AG04450 (cell line): ENCODE measurements at regions of chr1 and their contacts with region 1.

Region 1: DNA sequence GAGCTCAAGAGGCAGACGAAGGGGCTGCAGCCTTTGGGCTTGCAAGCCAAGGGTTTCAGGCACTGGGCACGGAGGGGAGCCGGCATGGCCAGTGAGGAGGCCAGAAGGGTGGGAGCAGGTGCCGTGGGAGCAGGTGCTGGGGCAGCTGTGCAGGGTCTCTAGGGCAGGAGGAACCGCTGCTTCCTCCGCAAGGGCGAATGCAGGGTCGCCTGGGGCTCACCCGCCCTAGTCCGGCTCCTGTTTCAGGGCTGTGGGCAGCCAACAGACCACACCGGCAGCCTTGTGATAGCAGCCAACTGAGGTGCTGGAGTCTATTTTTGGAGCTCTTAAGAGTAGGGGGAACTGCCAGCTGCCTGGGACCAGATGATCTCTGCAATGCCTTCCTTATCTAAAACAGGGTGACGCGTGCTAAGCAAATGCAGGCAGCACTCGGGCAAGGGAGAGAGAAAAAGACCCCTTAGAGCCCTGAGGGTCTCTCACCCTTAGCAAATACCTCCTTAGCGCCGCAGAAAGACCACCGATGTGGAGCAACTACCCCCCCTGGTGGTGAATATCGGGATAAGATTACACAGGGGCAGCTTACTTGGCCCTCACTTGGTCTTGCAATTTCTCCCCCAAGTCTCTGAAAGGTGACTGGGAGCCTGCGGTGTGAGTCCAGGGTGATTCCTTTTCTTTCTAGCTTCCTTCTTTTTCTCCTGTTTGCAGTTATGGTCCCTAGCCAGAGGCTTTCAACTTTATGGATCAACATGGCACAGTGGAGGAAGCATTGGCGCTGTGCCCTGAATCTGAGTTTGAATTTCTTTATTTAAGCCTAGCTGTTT is 20.7 kb upstream of the MAPKAPK2 start:
- DNase-seq: peak; percentile 29
- H3K4me3 ChIP-seq: peak overlapping the region; percentile 31; the same call in 1 of the 2 replicates
- H3K27ac ChIP-seq: no peak overlapping the region
- H3K27me3 ChIP-seq: peaks cover 14% of the 10 kb centered on the region
- CTCF ChIP-seq: peak; percentile 82

Region 2: DNA sequence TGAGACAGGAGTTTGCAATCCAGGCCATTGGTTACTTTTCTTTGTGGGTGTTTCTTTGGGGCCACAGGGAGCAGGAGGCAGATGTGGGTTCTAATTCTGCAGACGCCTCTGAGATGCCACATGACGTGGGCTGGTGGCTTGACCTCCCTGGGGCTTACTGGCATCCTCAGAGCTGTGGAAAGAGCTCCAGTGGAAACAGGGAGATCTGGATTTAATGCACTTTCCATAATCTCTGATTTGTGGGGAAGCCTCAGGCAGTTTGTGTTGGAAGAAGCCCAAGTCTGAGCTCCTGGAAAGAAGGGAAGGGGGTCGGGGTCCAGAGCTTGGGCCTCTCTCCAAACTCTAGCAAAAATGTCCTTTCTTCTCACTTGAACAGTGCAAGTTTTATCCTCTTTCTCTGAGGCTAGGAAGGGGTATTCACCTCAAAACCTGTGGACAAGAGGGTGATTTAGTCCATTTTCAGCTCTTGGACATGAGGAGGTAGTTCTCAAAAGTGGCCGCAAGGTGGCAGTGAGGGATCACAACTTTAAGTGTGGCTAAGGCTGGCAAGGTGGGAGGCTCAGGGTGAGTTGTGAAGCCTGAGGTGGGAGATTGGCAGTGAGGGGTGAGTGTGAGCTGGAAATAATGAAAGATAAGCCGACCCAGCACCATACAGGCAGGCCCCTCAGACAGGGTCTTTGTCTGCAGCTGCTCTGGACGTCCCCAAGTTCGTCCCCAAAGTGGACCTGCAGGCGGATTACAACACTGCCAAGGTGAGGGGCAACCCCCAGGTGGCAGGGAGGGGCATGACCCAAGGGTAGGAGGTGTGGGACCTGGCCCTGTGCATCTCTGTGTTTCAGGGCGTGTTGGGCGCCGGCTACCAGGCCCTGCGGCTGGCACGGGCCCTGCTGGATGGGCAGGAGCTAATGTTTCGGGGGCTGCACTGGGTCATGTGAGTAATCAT is 184.6 kb before region 1 on chr1:
- CTCF ChIA-PET with region 1: interaction called, 17 read pairs
- POLR2A ChIA-PET with region 1: no interaction called
- DNase-seq: peak; percentile 59
- H3K4me3 ChIP-seq: no peak overlapping the region
- H3K27ac ChIP-seq: no peak overlapping the region
- H3K27me3 ChIP-seq: no peaks in the 10 kb centered on the region
- CTCF ChIP-seq: peak; percentile 83

Region 3: GRCh38 chr1:206589206-206589605 is 74.8 kb before region 1 on chr1:
- CTCF ChIA-PET with region 1: interaction called, 25 read pairs
- POLR2A ChIA-PET with region 1: no interaction called
- DNase-seq: peak; percentile 92
- H3K4me3 ChIP-seq: no peak overlapping the region
- H3K27ac ChIP-seq: peak overlapping the region; percentile 77
- H3K27me3 ChIP-seq: no peaks in the 10 kb centered on the region
- CTCF ChIP-seq: no peak

Region 4: DNA sequence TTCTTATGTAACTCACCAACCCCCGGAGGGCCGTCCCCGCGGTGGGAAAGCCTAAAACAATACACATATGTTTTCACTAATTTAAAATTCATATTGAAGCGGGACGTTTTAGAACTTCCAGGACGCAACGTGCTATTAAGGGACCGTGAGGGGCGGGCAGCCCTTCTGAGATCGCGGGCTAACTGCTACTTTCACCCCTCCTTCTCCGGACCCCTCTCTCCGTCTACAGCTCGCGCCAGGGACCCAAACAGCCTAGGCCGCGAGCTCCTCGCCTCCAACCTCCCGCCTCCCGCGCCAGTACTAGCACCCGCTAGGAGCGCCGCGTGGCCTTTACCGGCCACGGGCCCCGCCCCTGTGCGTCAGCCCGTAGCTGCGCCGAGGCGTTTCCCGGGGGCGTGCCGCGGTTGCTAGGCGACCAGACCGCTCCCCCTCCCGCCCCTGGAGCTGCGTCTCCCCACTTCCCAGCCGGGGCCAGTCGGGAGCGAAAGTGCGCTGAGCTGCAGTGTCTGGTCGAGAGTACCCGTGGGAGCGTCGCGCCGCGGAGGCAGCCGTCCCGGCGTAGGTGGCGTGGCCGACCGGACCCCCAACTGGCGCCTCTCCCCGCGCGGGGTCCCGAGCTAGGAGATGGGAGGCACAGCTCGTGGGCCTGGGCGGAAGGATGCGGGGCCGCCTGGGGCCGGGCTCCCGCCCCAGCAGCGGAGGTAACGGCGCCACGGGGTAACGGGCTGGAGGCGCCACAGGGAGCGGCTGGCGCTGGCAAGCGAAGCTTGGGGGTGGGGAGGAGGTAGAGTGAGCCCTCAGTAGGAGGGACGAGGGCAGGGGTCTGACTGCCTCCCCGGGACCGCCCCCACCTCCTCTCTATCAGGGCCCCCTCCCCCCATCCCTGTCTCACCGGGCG is 28.7 kb before region 1 on chr1 and contains the start of gene DYRK3:
- CTCF ChIA-PET with region 1: interaction called, 202 read pairs
- POLR2A ChIA-PET with region 1: interaction called, 17 read pairs
- DNase-seq: peak; percentile 78
- H3K4me3 ChIP-seq: peak within 1 kb of the TSS; percentile 80
- H3K27ac ChIP-seq: peak within 1 kb of the TSS; percentile 69
- H3K27me3 ChIP-seq: no peaks in the 10 kb centered on the region
- CTCF ChIP-seq: no peak
- polyA plus RNA-seq, gene DYRK3: 13.4 and 13.8 TPM in 2 replicates

Region 5: DNA sequence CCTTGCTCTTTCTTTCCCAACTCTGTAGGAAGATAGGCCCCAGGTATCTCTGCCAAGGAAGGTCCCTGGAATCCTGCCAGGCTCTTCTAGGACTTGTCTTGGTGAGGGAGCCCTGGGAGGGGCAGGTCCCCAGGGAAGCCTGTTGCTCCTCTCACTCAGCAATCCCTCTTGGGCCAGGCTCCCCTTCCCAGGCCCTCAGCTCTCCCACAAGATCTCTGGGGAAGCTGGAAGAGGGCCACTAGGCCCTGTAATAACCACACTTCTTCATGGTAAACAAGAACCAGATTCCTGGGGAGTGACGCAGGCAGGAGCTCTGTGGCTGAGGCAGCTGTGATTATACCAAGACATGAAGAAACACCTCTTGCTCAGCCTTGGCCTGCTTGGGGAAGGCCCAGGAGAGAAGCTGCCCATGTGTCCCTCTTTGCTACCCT is 10.7 kb after region 1 on chr1:
- CTCF ChIA-PET with region 1: interaction called, 104 read pairs
- POLR2A ChIA-PET with region 1: interaction called, 3 read pairs
- DNase-seq: peak; percentile 98
- H3K4me3 ChIP-seq: no peak overlapping the region
- H3K27ac ChIP-seq: peak overlapping the region; percentile 96
- H3K27me3 ChIP-seq: peaks cover 3% of the 10 kb centered on the region
- CTCF ChIP-seq: no peak

Region 6: GRCh38 chr1:206700445-206701036 is 36.5 kb after region 1 on chr1:
- CTCF ChIA-PET with region 1: interaction called, 16 read pairs
- POLR2A ChIA-PET with region 1: no interaction called
- DNase-seq: peak; percentile 33
- H3K4me3 ChIP-seq: no peak overlapping the region
- H3K27ac ChIP-seq: peak overlapping the region; percentile 52
- H3K27me3 ChIP-seq: no peaks in the 10 kb centered on the region
- CTCF ChIP-seq: no peak

Region 7: DNA sequence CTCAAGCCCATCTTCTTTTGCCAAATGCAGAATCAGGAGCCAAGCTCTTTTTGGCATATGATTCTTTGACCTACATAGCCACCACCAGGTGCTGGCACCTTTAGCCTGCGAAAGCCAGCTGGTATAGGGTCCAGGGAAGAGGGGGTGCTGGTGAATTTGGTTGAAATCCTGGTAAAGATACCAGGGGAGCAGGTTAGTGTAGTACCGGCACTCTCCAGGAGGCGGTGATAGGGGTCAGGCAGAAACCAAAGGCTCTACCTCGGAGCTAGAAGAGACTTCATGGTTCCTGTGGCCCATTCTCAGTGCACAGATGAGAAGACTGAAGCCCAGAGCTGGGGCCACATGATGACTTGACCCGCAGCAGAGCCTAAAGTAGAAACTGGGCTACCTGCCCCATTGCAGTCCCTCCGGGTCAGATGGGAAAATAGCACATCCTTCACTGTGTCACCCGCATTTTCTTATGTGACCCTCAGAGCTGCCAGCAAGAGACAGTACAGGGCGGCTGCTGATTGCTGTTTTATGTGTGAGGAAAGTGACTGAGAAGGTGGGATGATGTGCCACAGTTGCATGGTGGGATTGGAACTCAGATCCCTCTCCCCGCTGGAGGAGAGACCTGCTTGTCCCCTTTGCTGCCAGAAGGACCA is 70.6 kb after region 1 on chr1:
- CTCF ChIA-PET with region 1: interaction called, 13 read pairs
- POLR2A ChIA-PET with region 1: no interaction called
- DNase-seq: no peak
- H3K4me3 ChIP-seq: no peak overlapping the region
- H3K27ac ChIP-seq: no peak overlapping the region
- H3K27me3 ChIP-seq: no peaks in the 10 kb centered on the region
- CTCF ChIP-seq: peak; percentile 91